ENCODE measurements at regions of chr2 and their contacts with region 1.

Region 1: DNA sequence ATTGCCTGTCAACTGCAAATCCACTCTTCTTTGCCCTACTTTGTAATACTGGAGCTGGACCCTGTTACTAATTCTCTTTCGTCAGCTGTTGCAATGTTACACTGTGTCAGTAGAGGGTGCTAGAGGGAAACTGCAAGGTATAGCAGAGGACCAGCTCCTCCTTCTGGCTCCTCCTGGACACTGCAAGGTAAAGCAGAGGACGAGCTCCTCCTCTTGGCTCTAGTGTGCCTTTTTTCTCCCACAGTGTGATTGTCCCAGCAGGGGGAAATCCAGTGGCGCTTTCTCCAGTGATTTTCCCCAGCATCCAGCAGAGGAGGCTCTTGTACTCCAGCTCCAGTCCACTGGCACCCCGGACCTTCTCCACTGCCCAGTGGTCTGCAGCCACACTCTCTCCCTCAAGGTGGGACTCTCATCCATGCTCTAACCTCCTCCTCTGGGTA is 95.6 kb downstream of the CAPN13 start:
- DNase-seq: peak; percentile 93
- H3K4me3 Mint-ChIP-seq: no peak overlapping the region
- H3K27ac Mint-ChIP-seq: no peak overlapping the region
- H3K4me1 Mint-ChIP-seq: peaks cover 4% of the 10 kb centered on the region
- H3K27me3 Mint-ChIP-seq: peaks cover 5% of the 10 kb centered on the region

Region 2: GRCh38 chr2:30146438-30147147 is 565.1 kb before region 1 on chr2 and contains the start of gene YPEL5:
- CTCF ChIA-PET with region 1: interaction called, 49 read pairs
- DNase-seq: peak; percentile 99
- H3K4me3 Mint-ChIP-seq: peak within 1 kb of the TSS; percentile 84
- H3K27ac Mint-ChIP-seq: peak within 1 kb of the TSS; percentile 99
- H3K4me1 Mint-ChIP-seq: peaks cover 42% of the 10 kb centered on the region
- H3K27me3 Mint-ChIP-seq: no peaks in the 10 kb centered on the region

Region 3: DNA sequence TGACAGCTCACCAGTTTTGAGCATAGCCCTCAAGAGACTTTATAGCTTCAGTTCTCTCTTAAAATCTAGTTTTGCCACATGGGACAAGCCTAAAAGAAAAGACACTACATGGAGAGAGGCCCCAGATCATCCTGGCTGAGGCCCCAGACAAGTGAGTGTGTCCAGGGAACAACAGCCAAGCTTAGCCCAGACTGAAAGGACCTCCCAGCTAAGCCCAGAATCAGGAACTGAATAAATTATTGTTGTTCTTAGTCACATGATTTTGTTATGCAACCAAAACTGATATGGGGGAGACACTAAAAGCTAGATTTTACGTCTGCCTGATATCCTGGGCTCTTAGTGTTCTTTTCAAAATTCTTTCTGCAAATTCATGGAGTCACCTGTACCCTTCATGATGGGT is 509.7 kb before region 1 on chr2:
- CTCF ChIA-PET with region 1: interaction called, 252 read pairs
- DNase-seq: no peak
- H3K4me3 Mint-ChIP-seq: no peak overlapping the region
- H3K27ac Mint-ChIP-seq: no peak overlapping the region
- H3K4me1 Mint-ChIP-seq: no peaks in the 10 kb centered on the region
- H3K27me3 Mint-ChIP-seq: peaks cover 32% of the 10 kb centered on the region

Region 4: GRCh38 chr2:30231212-30231995 is 480.3 kb before region 1 on chr2 and contains the start of gene LBH:
- CTCF ChIA-PET with region 1: interaction called, 16 read pairs
- DNase-seq: peak; percentile 89
- H3K4me3 Mint-ChIP-seq: peak within 1 kb of the TSS; percentile 79
- H3K27ac Mint-ChIP-seq: peak within 1 kb of the TSS; percentile 97
- H3K4me1 Mint-ChIP-seq: peaks cover 61% of the 10 kb centered on the region
- H3K27me3 Mint-ChIP-seq: peaks cover 16% of the 10 kb centered on the region

Region 5: DNA sequence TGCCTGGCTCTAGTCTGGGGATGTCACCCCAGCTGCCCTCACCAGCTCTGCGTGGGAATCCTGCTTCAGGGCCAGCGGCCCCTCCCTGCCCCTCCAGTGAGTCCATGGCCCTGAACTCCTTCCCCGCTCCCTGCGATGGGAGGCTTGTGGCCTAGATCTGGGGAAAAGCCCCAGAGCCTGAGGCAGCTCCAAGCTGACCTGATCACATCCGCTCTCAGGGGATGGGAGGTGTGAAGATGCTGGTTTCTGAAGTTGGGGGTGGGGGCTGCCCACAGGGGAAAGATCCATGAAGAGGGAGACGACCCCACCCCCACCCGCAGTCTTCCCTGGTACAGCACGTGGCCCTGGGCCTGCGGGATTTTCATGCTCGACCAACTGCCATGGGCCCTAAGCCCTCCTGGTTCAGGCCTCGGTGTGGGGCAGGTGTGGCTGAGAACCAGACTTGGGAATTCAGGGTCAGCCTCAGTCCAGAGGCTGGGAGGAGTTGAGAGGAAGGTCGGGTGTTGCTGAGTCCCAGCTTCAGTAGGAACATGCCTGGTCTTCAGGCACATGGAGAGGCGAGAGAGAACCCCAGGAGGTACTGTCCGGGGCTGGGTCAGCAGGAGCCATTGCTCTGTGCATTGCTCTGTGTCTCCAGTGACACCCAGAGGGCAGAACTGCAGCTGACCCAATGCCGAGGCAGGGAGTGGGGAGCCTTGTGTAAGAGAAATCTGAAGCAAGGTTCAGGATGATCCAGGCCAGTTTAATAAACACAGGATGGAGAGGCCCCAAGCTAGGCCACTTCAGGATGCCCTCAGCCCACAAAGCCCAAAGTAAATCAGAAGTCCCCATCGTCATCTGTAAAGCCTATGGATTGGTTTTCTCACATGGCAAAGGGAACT is 19.5 kb before region 1 on chr2:
- CTCF ChIA-PET with region 1: interaction called, 48 read pairs
- DNase-seq: peak; percentile 16
- H3K4me3 Mint-ChIP-seq: no peak overlapping the region
- H3K27ac Mint-ChIP-seq: no peak overlapping the region
- H3K4me1 Mint-ChIP-seq: no peaks in the 10 kb centered on the region
- H3K27me3 Mint-ChIP-seq: peaks cover 33% of the 10 kb centered on the region

Region 6: GRCh38 chr2:30820381-30821055 is 108.9 kb after region 1 on chr2:
- CTCF ChIA-PET with region 1: no interaction called
- DNase-seq: no peak
- H3K4me3 Mint-ChIP-seq: no peak overlapping the region
- H3K27ac Mint-ChIP-seq: no peak overlapping the region
- H3K4me1 Mint-ChIP-seq: no peaks in the 10 kb centered on the region
- H3K27me3 Mint-ChIP-seq: peaks cover 3% of the 10 kb centered on the region

Region 7: GRCh38 chr2:30846971-30847729 is 135.5 kb after region 1 on chr2:
- CTCF ChIA-PET with region 1: no interaction called
- DNase-seq: no peak
- H3K4me3 Mint-ChIP-seq: no peak overlapping the region
- H3K27ac Mint-ChIP-seq: no peak overlapping the region
- H3K4me1 Mint-ChIP-seq: no peaks in the 10 kb centered on the region
- H3K27me3 Mint-ChIP-seq: peaks cover 14% of the 10 kb centered on the region

Region 8: DNA sequence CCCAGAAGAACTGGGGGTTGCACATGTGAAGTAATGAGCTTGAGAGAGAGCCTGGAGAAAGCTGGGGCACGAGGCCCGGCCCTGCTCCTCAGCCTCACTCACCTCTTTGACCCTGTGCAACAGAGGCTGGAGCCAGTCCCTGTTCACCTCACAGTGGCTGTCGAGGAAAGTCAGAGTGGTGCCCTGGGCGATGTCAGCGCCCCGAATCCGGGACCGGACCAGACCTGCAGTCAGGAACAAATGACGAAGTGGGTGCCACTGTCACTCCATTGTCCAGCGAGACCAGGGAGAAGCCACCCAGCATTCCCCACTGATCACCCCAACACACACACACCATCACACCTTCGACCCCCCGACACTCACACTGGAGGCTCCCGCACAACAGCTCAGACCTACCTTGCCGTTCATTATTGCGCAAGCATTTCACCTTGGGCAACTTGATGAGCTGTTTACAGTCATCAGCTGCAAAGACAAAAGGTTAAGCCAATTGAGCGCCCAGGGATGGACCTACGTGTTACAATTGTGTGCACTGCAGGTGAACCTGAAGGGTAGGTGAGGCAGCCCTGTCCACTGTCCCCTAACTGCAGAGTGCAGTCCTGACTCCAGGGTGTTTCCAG is 244.0 kb after region 1 on chr2:
- CTCF ChIA-PET with region 1: no interaction called
- DNase-seq: no peak
- H3K4me3 Mint-ChIP-seq: no peak overlapping the region
- H3K27ac Mint-ChIP-seq: no peak overlapping the region
- H3K4me1 Mint-ChIP-seq: no peaks in the 10 kb centered on the region
- H3K27me3 Mint-ChIP-seq: no peaks in the 10 kb centered on the region

Region 9: DNA sequence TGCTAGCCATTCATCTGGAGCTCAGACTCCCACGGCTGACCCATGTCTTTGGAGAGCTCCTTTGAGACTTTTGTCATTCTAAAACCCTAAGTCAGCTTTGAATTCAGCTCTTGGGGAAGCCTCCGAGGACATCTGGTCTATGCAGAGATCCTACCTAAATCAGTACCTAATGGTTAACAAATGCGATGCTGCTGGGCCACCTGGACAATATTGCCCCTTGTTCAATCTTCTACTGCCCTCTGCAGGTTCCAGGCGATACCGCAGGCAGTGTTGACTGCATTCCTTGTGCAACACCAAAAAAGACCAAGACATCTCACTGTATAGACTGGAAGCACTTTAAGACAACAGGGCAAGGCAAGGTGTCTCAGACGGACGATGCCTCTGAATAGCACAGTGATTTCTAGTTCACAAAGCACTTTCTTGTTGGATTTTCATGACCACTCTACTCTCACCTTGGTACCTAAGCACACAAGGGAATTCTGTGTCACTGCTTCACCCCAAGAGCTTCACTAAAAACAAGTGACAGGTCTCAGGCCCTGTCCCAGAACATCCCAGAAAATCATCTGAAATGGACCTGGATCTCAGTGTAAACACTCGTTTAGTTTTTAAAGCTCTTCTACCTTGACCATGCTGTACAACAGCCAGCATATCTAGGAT is 622.0 kb after region 1 on chr2:
- CTCF ChIA-PET with region 1: interaction called, 80 read pairs
- DNase-seq: peak; percentile 88
- H3K4me3 Mint-ChIP-seq: no peak overlapping the region
- H3K27ac Mint-ChIP-seq: no peak overlapping the region
- H3K4me1 Mint-ChIP-seq: no peaks in the 10 kb centered on the region
- H3K27me3 Mint-ChIP-seq: peaks cover 39% of the 10 kb centered on the region

Measured in activated naive CD4-positive, alpha-beta T cell treated with anti-CD3 and anti-CD28 coated beads, Interleukin-2, amount 10 ng/mL, durations not matched to agents 7 days and 5 days (primary cell).